GM12878 (cell line): ENCODE measurements at regions of chr6 and their contacts with region 1.

Region 1: DNA sequence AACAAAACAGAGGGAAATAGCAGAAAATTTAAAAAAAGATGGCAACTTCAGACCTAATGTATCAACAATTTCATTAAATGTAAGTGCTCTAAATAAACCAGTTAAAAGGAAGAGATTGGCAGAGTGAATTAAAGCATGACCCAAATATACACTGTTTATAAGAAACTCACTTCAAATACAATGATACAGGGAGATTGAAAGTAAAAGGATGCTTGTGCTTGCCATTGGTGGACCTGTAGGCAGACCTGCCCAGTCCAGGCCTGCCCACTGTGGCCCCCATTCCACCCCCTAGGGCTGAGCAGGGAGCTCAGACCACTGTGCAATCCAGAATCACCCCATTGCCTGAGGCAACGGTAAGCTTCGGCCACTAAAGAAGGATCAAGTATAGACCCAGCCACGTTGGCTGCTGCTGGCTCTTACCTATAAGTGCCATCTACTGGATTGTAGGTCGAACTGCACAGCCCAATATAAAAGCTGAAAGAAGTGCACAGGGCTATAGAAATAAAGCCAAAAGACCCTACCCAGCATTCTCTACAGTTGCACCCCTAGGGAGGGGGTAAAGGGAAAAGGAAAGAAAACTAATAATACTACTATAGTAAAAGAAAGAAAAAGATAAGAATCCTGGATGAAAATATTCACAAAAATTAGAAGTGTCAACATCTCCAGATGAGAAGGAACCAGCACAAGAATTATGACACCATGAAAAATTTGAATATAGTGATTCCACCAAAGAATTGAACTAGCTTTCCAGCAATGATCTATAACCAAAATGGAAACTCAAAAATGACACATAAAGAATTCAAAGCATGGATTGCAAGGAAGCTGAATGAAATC is 36.1 kb downstream of the PSMB1 start:
- DNase-seq: no peak
- ATAC-seq: peak; percentile 99
- H3K4me3 ChIP-seq: no peak overlapping the region
- H3K27ac ChIP-seq: no peak overlapping the region
- H3K4me1 ChIP-seq: no peaks in the 10 kb centered on the region
- H3K27me3 ChIP-seq: no peaks in the 10 kb centered on the region
- CTCF ChIP-seq: peak; percentile 77 to 86 (median 80)
- EP300 ChIP-seq: no peak
- POLR2A ChIP-seq: no peak
- RAD21 ChIP-seq: peak; percentile 95

Region 2: GRCh38 chr6:168956884-168957730 is 1559.9 kb before region 1 on chr6:
- CTCF ChIA-PET with region 1: interaction called, 4 read pairs
- POLR2A ChIA-PET with region 1: no interaction called
- RAD21 ChIA-PET with region 1: interaction called, 3 read pairs
- SMC1A ChIA-PET with region 1: no interaction called
- in situ Hi-C with region 1: loop called (anchors 10 kb)
- intact Hi-C with region 1: loop called (anchors 5 kb)
- DNase-seq: no peak
- ATAC-seq: peak; percentile 70
- H3K4me3 ChIP-seq: no peak overlapping the region
- H3K27ac ChIP-seq: no peak overlapping the region
- H3K4me1 ChIP-seq: no peaks in the 10 kb centered on the region
- H3K27me3 ChIP-seq: no peaks in the 10 kb centered on the region
- CTCF ChIP-seq: peak; percentile 53 to 68 (median 60); a peak in 5 of 6 replicates
- EP300 ChIP-seq: no peak
- POLR2A ChIP-seq: no peak
- RAD21 ChIP-seq: peak; percentile 66

Region 3: GRCh38 chr6:169831450-169832246 is 685.4 kb before region 1 on chr6:
- CTCF ChIA-PET with region 1: interaction called, 40 read pairs
- POLR2A ChIA-PET with region 1: no interaction called
- RAD21 ChIA-PET with region 1: interaction called, 18 read pairs
- SMC1A ChIA-PET with region 1: interaction called, 25 read pairs
- in situ Hi-C with region 1: loop called (anchors 5 kb)
- intact Hi-C with region 1: loop called (anchors 1 kb)
- DNase-seq: no peak
- ATAC-seq: peak; percentile 95
- H3K4me3 ChIP-seq: no peak overlapping the region
- H3K27ac ChIP-seq: no peak overlapping the region
- H3K4me1 ChIP-seq: no peaks in the 10 kb centered on the region
- H3K27me3 ChIP-seq: no peaks in the 10 kb centered on the region
- CTCF ChIP-seq: peak; percentile 79 to 84 (median 80)
- EP300 ChIP-seq: no peak
- POLR2A ChIP-seq: no peak
- RAD21 ChIP-seq: peak; percentile 75

Region 4: DNA sequence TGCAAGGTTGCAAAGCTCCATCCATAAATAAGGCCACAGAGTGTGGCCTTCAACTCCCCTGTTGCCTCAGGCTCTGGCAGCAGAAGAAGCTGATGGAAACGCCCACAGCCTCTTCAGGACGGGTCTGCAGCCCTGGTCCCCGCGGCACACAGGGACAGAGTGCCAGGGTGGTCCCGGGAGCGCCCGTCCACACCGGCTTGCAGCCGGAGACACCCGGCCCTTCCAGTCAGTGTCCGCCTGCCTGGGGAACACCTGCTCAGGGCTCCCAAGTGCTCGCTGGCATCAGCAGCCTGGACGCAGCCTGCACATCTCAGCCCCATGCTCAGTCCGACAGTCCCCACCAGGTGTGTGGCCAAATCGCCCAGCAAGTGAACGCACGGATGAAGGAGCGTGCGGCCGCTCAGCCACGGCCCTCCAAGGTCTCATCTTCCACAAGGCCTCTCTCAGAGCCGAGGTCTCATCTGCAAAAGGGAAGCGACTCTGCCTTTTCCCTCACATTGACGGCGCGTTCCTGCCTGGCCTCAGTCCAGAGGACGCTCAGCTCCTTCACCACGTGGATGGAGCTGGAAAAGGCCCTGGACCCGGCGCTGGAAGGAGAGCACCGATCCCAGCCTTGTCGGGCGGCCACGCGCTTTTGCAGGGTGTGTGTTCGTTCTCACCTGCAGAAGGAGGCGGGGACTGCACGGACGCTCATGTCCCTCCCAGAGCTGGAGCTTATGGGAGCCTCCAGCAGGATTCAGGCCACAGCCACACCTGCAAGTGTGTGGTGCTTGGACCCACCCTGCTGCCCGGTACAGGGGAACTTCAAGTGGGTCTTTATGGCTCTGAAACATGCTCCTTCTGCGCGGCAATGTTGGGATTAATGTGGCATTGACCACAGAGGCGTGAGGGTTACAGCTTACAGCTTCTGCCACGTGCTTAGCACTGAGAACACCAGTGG is 406.5 kb before region 1 on chr6:
- CTCF ChIA-PET with region 1: no interaction called
- POLR2A ChIA-PET with region 1: no interaction called
- RAD21 ChIA-PET with region 1: no interaction called
- SMC1A ChIA-PET with region 1: no interaction called
- in situ Hi-C with region 1: no loop called
- intact Hi-C with region 1: no loop called
- DNase-seq: no peak
- ATAC-seq: no peak
- H3K4me3 ChIP-seq: no peak overlapping the region
- H3K27ac ChIP-seq: no peak overlapping the region
- H3K4me1 ChIP-seq: no peaks in the 10 kb centered on the region
- H3K27me3 ChIP-seq: no peaks in the 10 kb centered on the region
- CTCF ChIP-seq: no peak
- EP300 ChIP-seq: no peak
- POLR2A ChIP-seq: no peak
- RAD21 ChIP-seq: no peak

Region 5: DNA sequence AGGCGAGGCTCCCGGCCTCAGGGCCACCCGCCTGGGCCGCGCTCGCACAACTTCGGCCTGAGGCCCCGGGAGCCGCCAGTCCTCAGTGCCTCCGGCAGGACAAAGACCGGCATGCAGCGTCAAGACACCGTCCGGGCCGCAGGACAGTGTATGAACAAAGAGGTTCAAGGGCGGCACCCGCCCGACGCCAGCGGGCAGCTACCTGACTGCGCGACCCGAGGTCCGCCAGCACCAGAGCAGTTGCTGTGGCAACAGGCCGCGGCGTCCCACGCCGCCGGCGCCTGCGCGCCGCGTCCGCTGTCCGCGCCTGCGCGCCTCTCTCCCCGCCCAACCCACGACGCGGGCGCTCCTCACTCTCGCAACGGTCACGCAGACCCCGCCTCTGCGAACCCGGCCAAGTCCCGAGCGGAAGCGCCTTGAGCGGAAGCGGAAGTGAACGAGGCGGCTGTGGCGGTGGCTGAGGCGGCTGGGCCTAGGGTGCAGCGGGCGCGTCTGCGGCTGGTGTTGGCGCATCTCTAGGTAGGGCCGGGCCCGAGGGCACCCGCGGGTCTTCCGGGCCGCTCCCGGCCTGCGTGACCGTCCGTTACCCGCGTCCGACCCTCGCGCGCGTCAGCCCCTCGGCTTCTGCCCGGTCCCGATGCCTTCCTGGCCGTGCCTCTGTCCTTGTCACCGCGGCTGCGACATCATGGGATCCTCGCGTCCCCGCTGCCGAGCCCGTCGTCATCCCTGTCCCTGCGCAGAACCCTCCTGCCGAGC is 210.5 kb before region 1 on chr6 and contains the start of gene FAM120B:
- CTCF ChIA-PET with region 1: interaction called, 3 read pairs
- POLR2A ChIA-PET with region 1: interaction called, 3 read pairs
- RAD21 ChIA-PET with region 1: interaction called, 4 read pairs
- SMC1A ChIA-PET with region 1: interaction called, 3 read pairs
- in situ Hi-C with region 1: no loop called
- intact Hi-C with region 1: loop called (anchors 5 kb)
- DNase-seq: peak; percentile 72
- ATAC-seq: peak; percentile 96
- H3K4me3 ChIP-seq: peak within 1 kb of the TSS; percentile 94
- H3K27ac ChIP-seq: peak within 1 kb of the TSS; percentile 84
- H3K4me1 ChIP-seq: peaks cover 5% of the 10 kb centered on the region; the same call in 1 of the 2 replicates
- H3K27me3 ChIP-seq: no peaks in the 10 kb centered on the region
- CTCF ChIP-seq: no peak
- EP300 ChIP-seq: no peak
- POLR2A ChIP-seq: peak; percentile 99
- RAD21 ChIP-seq: no peak
- polyA plus RNA-seq, gene FAM120B: 3.3 to 4.8 TPM

Region 6: GRCh38 chr6:170464524-170464979 is 52.4 kb before region 1 on chr6:
- CTCF ChIA-PET with region 1: interaction called, 18 read pairs
- POLR2A ChIA-PET with region 1: interaction called, 6 read pairs
- RAD21 ChIA-PET with region 1: interaction called, 25 read pairs
- SMC1A ChIA-PET with region 1: interaction called, 22 read pairs
- in situ Hi-C with region 1: no loop called
- intact Hi-C with region 1: no loop called
- DNase-seq: peak; percentile 30
- ATAC-seq: peak; percentile 80
- H3K4me3 ChIP-seq: no peak overlapping the region
- H3K27ac ChIP-seq: no peak overlapping the region
- H3K4me1 ChIP-seq: peaks cover 14% of the 10 kb centered on the region
- H3K27me3 ChIP-seq: no peaks in the 10 kb centered on the region
- CTCF ChIP-seq: no peak
- EP300 ChIP-seq: peak; percentile 32 to 51; a peak in 1 of 4 replicates
- POLR2A ChIP-seq: no peak
- RAD21 ChIP-seq: no peak

Region 7: GRCh38 chr6:170529839-170530469 is 13.0 kb after region 1 on chr6:
- CTCF ChIA-PET with region 1: interaction called, 17 read pairs
- POLR2A ChIA-PET with region 1: no interaction called
- RAD21 ChIA-PET with region 1: interaction called, 4 read pairs
- SMC1A ChIA-PET with region 1: interaction called, 14 read pairs
- in situ Hi-C with region 1: no loop called
- intact Hi-C with region 1: no loop called
- DNase-seq: peak; percentile 4
- ATAC-seq: peak; percentile 97
- H3K4me3 ChIP-seq: no peak overlapping the region
- H3K27ac ChIP-seq: no peak overlapping the region
- H3K4me1 ChIP-seq: no peaks in the 10 kb centered on the region
- H3K27me3 ChIP-seq: no peaks in the 10 kb centered on the region
- CTCF ChIP-seq: peak; percentile 84 to 94 (median 92); a peak in 5 of 6 replicates
- EP300 ChIP-seq: no peak
- POLR2A ChIP-seq: no peak
- RAD21 ChIP-seq: peak; percentile 89

Region 8: DNA sequence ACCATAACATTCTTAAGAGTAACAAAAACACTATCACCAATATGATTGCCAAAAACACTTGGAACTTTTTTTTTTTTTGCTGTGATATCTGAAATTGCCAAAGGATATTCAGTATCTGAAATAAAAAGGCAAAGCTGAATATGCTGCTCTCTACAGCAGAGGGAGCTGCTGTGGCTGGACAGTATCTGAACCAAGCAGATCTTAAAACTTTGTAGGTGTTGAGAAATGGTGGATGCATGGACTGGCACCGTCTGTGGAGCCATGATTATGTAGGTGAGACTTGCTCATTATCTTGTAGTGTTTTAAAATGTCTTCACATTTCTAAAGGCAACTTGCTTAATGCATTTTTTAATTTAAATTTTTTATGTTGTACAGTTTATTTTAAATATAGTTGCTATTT is 58.2 kb after region 1 on chr6:
- CTCF ChIA-PET with region 1: no interaction called
- POLR2A ChIA-PET with region 1: no interaction called
- RAD21 ChIA-PET with region 1: no interaction called
- SMC1A ChIA-PET with region 1: no interaction called
- in situ Hi-C with region 1: no loop called
- intact Hi-C with region 1: no loop called
- DNase-seq: no peak
- ATAC-seq: no peak
- H3K4me3 ChIP-seq: no peak overlapping the region
- H3K27ac ChIP-seq: no peak overlapping the region
- H3K4me1 ChIP-seq: no peaks in the 10 kb centered on the region
- H3K27me3 ChIP-seq: no peaks in the 10 kb centered on the region
- CTCF ChIP-seq: 0 out of 6 replicates have a peak, but pooled peaks of 1 of the 3 experiments have one; percentile 4
- EP300 ChIP-seq: no peak
- POLR2A ChIP-seq: no peak
- RAD21 ChIP-seq: no peak